ENCODE measurements at regions of chr13 and their contacts with region 1.

Region 1: GRCh38 chr13:27374650-27375049 is 49.8 kb upstream of the GTF3A start:
- DNase-seq: peak; percentile 70
- ATAC-seq: peak; percentile 93
- H3K4me3 Mint-ChIP-seq: no peak overlapping the region
- H3K27ac Mint-ChIP-seq: no peak overlapping the region
- H3K4me1 Mint-ChIP-seq: peaks cover 8% of the 10 kb centered on the region
- H3K27me3 Mint-ChIP-seq: peaks cover 15% of the 10 kb centered on the region
- CTCF ChIP-seq: peak; percentile 52

Region 2: DNA sequence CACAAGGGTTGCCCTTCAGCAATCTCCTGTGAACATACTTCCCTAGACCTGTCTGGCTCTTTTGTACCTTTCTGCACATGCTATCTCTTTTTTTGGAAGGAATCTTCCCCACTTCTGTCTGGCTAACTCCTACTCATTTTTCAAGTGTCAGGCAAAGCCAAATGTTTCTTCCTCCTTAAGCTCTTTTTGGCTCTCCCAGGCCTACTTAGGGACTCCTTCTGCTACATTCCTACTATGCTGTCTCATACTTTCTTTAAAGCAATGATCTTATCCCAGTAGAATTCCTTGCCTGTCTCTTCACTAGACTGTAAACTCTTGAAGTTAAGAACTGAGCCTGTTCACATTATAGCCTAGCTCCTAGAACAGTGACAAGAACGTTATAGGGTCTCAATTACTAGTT is 932.1 kb before region 1 on chr13:
- CTCF ChIA-PET with region 1: no interaction called
- POLR2A ChIA-PET with region 1: no interaction called
- intact Hi-C with region 1: no loop called
- DNase-seq: no peak
- ATAC-seq: no peak
- H3K4me3 Mint-ChIP-seq: no peak overlapping the region
- H3K27ac Mint-ChIP-seq: no peak overlapping the region
- H3K4me1 Mint-ChIP-seq: no peaks in the 10 kb centered on the region
- H3K27me3 Mint-ChIP-seq: peaks cover 11% of the 10 kb centered on the region
- CTCF ChIP-seq: no peak

Region 3: DNA sequence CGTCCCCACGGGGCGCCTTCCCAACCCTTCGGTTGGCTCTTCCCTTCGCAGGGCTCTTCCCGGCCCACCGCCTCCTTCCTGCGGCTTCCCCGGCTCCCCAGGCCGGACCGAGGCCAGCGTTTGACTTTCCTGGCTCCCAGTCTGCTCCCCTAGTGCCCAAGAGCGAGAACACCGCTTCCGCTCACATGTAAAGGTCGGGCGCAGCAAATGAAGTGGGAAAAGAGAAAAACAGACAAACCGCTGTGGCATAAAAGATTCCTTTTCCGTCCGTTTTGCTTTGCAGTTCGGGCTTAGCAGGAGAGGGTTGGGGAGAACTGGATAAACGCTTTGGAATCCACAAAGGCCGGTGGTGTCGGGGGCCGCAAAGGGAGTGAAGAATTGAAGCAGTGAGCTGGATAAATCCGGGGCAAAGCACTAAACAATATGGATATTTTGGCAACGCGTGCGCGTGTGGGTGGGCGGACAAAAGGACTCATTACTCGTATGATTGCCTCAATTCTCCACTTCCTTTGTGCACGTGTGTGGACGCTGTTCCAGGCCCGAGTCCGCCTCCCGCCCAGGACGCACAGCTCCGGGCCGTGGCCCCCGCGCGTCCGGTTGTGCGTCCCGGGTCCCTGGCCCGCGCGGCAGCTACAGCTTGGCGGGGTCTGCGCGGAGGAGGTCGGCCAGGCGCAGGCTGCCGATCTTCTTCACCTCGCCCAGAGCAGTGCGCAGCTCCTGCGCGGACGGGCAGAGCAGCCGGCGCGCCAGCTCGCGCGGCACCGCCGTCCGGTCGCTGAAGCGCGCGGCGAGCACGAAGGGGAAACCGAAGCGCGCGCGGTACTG is 603.0 kb after region 1 on chr13:
- CTCF ChIA-PET with region 1: interaction called, 3 read pairs
- POLR2A ChIA-PET with region 1: no interaction called
- intact Hi-C with region 1: loop called (anchors 10 kb)
- DNase-seq: no peak
- ATAC-seq: no peak
- H3K4me3 Mint-ChIP-seq: peak overlapping the region; percentile 29
- H3K27ac Mint-ChIP-seq: no peak overlapping the region
- H3K4me1 Mint-ChIP-seq: peaks cover 12% of the 10 kb centered on the region
- H3K27me3 Mint-ChIP-seq: peaks cover 84% of the 10 kb centered on the region
- CTCF ChIP-seq: no peak

Measured in activated CD8-positive, alpha-beta T cell treated with anti-CD3 and anti-CD28 coated beads for 36 hours (primary cell).